T-cell (primary cell): ENCODE measurements at regions of chr17 and their contacts with region 1.

Region 1: GRCh38 chr17:2336215-2336851 is at the start of gene TSR1:
- DNase-seq: peak; percentile 79 to 93 (median 87)
- ATAC-seq: peak; percentile 81 to 86 (median 84)
- H3K4me3 ChIP-seq: peak within 1 kb of the TSS; percentile 83 to 91
- H3K4me3 Mint-ChIP-seq: peak within 1 kb of the TSS; percentile 99 to 100 (median 99)
- H3K27ac ChIP-seq: peak within 1 kb of the TSS; percentile 74
- H3K27ac Mint-ChIP-seq: peak within 1 kb of the TSS; percentile 94 to 96
- H3K4me1 ChIP-seq: peaks cover 12 to 33% of the 10 kb centered on the region in 2 experiments
- H3K4me1 Mint-ChIP-seq: peaks cover 28 to 39% (median 31%) of the 10 kb centered on the region in 3 donors
- H3K27me3 ChIP-seq: no peaks in the 10 kb centered on the region
- H3K27me3 Mint-ChIP-seq: no peaks in the 10 kb centered on the region
- total RNA-seq, gene TSR1: 27.8 to 33.7 (median 28.8) TPM

Region 2: GRCh38 chr17:2137342-2138098 is 198.8 kb before region 1 on chr17:
- CTCF ChIA-PET with region 1: no interaction called
- POLR2A ChIA-PET with region 1: interaction called in 1 of 2 experiments, 10 read pairs
- DNase-seq: no peak
- ATAC-seq: no peak
- H3K4me3 ChIP-seq: no peak overlapping the region
- H3K4me3 Mint-ChIP-seq: no peak overlapping the region
- H3K27ac ChIP-seq: no peak overlapping the region
- H3K27ac Mint-ChIP-seq: peak overlapping the region in 1 of 2 donors; percentile 77
- H3K4me1 ChIP-seq: peaks cover 0 to 8% of the 10 kb centered on the region in 2 experiments
- H3K4me1 Mint-ChIP-seq: peaks cover 15 to 21% (median 17%) of the 10 kb centered on the region in 3 donors
- H3K27me3 ChIP-seq: no peaks in the 10 kb centered on the region
- H3K27me3 Mint-ChIP-seq: no peaks in the 10 kb centered on the region

Region 3: DNA sequence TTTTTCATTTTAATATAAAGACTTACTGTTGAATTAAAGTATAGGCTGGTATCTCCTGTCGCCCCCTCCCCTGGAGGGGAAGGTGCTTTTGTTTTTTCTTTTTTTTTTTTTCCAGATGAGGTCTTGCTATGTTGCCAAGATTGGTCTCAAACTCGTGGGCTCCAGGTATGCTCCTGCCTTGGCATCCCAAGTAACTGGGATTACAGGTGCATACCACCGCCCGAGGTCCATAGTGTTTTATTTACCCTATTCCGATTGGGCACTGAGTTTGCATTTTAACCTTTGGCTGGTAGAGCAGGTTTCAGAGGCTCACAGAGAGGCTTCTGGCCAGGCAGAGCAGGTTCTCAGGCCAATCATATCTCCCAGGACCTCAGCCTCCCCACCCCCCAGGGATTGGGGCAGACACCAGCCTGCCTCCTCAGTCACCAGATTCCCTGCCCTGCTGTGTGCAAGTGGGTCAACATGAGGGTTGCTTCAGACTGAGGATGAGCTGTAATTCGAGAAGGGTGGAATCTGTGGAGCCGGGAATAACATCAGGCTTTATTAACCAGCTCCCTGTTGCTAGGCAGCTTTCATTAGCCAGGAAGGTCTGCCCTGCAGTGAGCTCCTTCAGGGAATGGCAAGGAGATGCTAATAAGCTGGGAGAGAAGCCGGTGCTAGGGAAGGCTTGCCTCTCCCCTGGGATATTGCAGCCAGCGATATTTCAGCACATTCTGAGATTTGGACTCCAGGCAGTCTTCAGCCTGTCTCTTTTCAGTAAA is 11.4 kb after region 1 on chr17:
- CTCF ChIA-PET with region 1: interaction called, 7 to 11 read pairs
- POLR2A ChIA-PET with region 1: no interaction called
- DNase-seq: no peak
- ATAC-seq: no peak
- H3K4me3 ChIP-seq: no peak overlapping the region
- H3K4me3 Mint-ChIP-seq: no peak overlapping the region
- H3K27ac ChIP-seq: no peak overlapping the region
- H3K27ac Mint-ChIP-seq: no peak overlapping the region
- H3K4me1 ChIP-seq: no peaks in the 10 kb centered on the region
- H3K4me1 Mint-ChIP-seq: peaks cover 9 to 11% (median 11%) of the 10 kb centered on the region in 3 donors
- H3K27me3 ChIP-seq: no peaks in the 10 kb centered on the region
- H3K27me3 Mint-ChIP-seq: no peaks in the 10 kb centered on the region

Region 4: GRCh38 chr17:2392252-2393173 is 56.2 kb after region 1 on chr17:
- CTCF ChIA-PET with region 1: interaction called in 1 of 2 experiments, 14 read pairs
- POLR2A ChIA-PET with region 1: interaction called in 1 of 2 experiments, 3 read pairs
- DNase-seq: peak; percentile 88 to 99 (median 95)
- ATAC-seq: peak; percentile 68 to 73 (median 72)
- H3K4me3 ChIP-seq: peak overlapping the region; percentile 60 to 97
- H3K4me3 Mint-ChIP-seq: peak overlapping the region; percentile 88 to 96 (median 88)
- H3K27ac ChIP-seq: peak overlapping the region; percentile 99
- H3K27ac Mint-ChIP-seq: peak overlapping the region; percentile 95 to 96
- H3K4me1 ChIP-seq: peaks cover 20 to 74% of the 10 kb centered on the region in 2 experiments
- H3K4me1 Mint-ChIP-seq: peaks cover 60 to 67% (median 60%) of the 10 kb centered on the region in 3 donors
- H3K27me3 ChIP-seq: no peaks in the 10 kb centered on the region
- H3K27me3 Mint-ChIP-seq: no peaks in the 10 kb centered on the region